ENCODE measurements at regions of chr2 and their contacts with region 1.

Region 1: GRCh38 chr2:121570036-121570666 is 39.5 kb downstream of the RNU4ATAC start:
- DNase-seq: no peak
- ATAC-seq: no peak
- H3K4me3 ChIP-seq: no peak overlapping the region
- H3K27ac ChIP-seq: no peak overlapping the region
- H3K4me1 ChIP-seq: peaks cover 2 to 12% of the 10 kb centered on the region in 2 donors
- H3K27me3 ChIP-seq: no peaks in the 10 kb centered on the region

Region 2: GRCh38 chr2:121539750-121540469 is 30.2 kb before region 1 on chr2:
- intact Hi-C with region 1: loop called in 1 of 2 experiments (anchors 5 kb)
- DNase-seq: no peak
- ATAC-seq: no peak
- H3K4me3 ChIP-seq: no peak overlapping the region
- H3K27ac ChIP-seq: no peak overlapping the region
- H3K4me1 ChIP-seq: peaks cover 2 to 9% of the 10 kb centered on the region in 2 donors
- H3K27me3 ChIP-seq: no peaks in the 10 kb centered on the region

Region 3: GRCh38 chr2:121599963-121600651 is 30.0 kb after region 1 on chr2:
- intact Hi-C with region 1: no loop called
- DNase-seq: no peak
- ATAC-seq: no peak
- H3K4me3 ChIP-seq: no peak overlapping the region
- H3K27ac ChIP-seq: no peak overlapping the region
- H3K4me1 ChIP-seq: peaks cover 1 to 3% of the 10 kb centered on the region in 2 donors
- H3K27me3 ChIP-seq: no peaks in the 10 kb centered on the region

Measured in aorta (tissue), 5 donors.